ENCODE measurements at regions of chr13 and their contacts with region 1.

Region 1: GRCh38 chr13:69565334-69565733 is 542.3 kb upstream of the ATXN8OS start:
- DNase-seq: no peak
- H3K4me3 ChIP-seq: no peak overlapping the region
- H3K27ac ChIP-seq: no peak overlapping the region
- H3K4me1 ChIP-seq: no peaks in the 10 kb centered on the region
- H3K27me3 ChIP-seq: no peaks in the 10 kb centered on the region
- CTCF ChIP-seq: no peak
- POLR2A ChIP-seq: no peak

Region 2: DNA sequence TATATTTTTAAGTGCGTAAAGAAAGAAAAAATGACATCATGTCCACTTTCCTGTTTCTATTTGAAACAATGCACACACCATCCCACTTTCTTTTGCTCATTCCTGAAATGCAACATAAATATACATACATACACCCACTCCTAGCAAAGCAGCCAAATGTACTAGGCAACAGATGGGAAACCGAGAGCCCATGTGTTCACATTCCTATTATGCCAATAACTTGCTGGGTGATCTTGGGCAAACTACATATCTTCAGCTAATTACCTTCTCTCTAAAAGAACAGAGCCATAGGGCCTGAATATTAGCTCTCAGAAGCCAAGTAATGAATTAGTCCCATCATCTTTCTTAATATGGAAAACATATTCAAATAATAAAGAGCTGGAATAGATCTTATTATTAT is 68.4 kb before region 1 on chr13:
- intact Hi-C with region 1: loop called (anchors 2 kb)
- DNase-seq: no peak
- H3K4me3 ChIP-seq: no peak overlapping the region
- H3K27ac ChIP-seq: no peak overlapping the region
- H3K4me1 ChIP-seq: no peaks in the 10 kb centered on the region
- H3K27me3 ChIP-seq: no peaks in the 10 kb centered on the region
- CTCF ChIP-seq: no peak
- POLR2A ChIP-seq: no peak

Region 3: DNA sequence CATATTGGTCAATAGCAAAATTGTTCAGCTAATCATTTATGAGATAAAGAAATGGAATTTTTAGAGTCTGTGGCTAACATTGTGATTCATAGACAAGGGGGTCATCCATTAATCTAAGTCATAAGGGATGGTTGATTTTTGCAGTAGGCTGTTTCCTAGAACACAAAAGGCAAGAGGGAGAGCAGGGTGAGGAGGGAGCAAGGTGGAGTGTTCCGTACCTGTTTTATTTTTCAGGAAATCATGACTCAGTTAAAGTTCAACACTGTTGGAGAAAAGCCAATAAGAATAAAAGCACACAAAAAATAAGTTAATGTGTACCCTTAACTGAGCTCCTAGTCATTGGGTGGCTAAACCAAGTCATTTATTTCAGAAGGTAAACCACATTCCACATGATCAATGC is 29.8 kb after region 1 on chr13:
- intact Hi-C with region 1: no loop called
- DNase-seq: no peak
- H3K4me3 ChIP-seq: no peak overlapping the region
- H3K27ac ChIP-seq: no peak overlapping the region
- H3K4me1 ChIP-seq: no peaks in the 10 kb centered on the region
- H3K27me3 ChIP-seq: peaks cover 0 to 3% of the 10 kb centered on the region in 2 donors
- CTCF ChIP-seq: no peak
- POLR2A ChIP-seq: no peak

Measured in breast epithelium (tissue), 4 donors.